MCF 10A (cell line): ENCODE measurements at regions of chr22 and their contacts with region 1.

Region 1: GRCh38 chr22:46035742-46036557 is 59.0 kb upstream of the WNT7B start:
- DNase-seq: peak; percentile 98
- H3K4me3 Mint-ChIP-seq: peak overlapping the region; percentile 75
- H3K27ac Mint-ChIP-seq: peak overlapping the region; percentile 75
- H3K4me1 Mint-ChIP-seq: peaks cover 4% of the 10 kb centered on the region
- H3K27me3 Mint-ChIP-seq: no peaks in the 10 kb centered on the region
- CTCF ChIP-seq: no peak

Region 2: DNA sequence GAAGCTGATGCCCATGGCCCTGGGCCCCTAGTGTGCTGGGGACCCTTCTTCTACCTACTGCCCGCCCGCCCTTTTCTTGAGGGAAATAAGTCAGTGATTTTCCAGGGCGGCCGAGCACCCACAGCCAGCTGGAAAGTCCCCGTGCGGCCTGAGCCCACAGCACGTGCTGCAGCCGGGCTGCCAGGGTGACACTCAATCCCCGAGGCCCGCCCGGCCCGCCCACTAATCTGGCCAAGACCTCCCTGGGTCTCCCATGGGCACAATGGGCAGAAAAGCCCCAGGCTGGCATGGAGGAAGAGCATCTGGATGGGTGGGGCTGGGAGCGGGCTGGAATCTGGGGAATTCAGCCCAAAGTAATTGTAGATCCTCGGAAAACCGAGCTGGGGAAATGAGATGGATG is 83.8 kb before region 1 on chr22:
- CTCF ChIA-PET with region 1: no interaction called
- POLR2A ChIA-PET with region 1: no interaction called
- intact Hi-C with region 1: no loop called
- DNase-seq: no peak
- H3K4me3 Mint-ChIP-seq: no peak overlapping the region
- H3K27ac Mint-ChIP-seq: no peak overlapping the region
- H3K4me1 Mint-ChIP-seq: no peaks in the 10 kb centered on the region
- H3K27me3 Mint-ChIP-seq: no peaks in the 10 kb centered on the region
- CTCF ChIP-seq: no peak

Region 3: DNA sequence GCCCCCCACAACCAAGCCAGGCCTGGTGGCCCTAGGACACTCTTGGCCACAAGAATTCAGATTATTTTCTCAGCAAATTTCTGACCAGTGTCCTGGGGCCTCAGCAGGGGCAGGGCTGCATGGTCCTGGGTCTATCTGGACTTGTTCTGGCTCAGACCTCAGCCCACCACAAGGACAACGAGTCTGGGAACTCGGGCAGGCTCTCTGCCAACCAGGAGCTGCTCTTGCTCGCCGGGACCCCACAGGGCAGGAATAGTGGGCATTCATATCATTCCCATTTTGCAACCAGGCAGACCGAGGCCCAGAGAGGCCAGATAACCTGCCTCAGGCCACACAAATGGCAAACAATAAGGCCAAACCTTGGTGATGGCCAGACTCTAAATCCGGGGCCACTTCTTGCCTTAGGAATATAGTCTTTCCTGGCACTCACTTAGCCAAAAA is 16.4 kb after region 1 on chr22:
- CTCF ChIA-PET with region 1: interaction called, 10 read pairs
- POLR2A ChIA-PET with region 1: interaction called, 160 read pairs
- intact Hi-C with region 1: no loop called
- DNase-seq: no peak
- H3K4me3 Mint-ChIP-seq: peak overlapping the region; percentile 81
- H3K27ac Mint-ChIP-seq: peak overlapping the region; percentile 92
- H3K4me1 Mint-ChIP-seq: peaks cover 21% of the 10 kb centered on the region
- H3K27me3 Mint-ChIP-seq: no peaks in the 10 kb centered on the region
- CTCF ChIP-seq: no peak

Region 4: GRCh38 chr22:46057762-46058420 is 21.9 kb after region 1 on chr22:
- CTCF ChIA-PET with region 1: interaction called, 4 read pairs
- POLR2A ChIA-PET with region 1: interaction called, 160 read pairs
- intact Hi-C with region 1: no loop called
- DNase-seq: peak; percentile 87
- H3K4me3 Mint-ChIP-seq: peak overlapping the region; percentile 81
- H3K27ac Mint-ChIP-seq: peak overlapping the region; percentile 98
- H3K4me1 Mint-ChIP-seq: peaks cover 33% of the 10 kb centered on the region
- H3K27me3 Mint-ChIP-seq: no peaks in the 10 kb centered on the region
- CTCF ChIP-seq: no peak

Region 5: DNA sequence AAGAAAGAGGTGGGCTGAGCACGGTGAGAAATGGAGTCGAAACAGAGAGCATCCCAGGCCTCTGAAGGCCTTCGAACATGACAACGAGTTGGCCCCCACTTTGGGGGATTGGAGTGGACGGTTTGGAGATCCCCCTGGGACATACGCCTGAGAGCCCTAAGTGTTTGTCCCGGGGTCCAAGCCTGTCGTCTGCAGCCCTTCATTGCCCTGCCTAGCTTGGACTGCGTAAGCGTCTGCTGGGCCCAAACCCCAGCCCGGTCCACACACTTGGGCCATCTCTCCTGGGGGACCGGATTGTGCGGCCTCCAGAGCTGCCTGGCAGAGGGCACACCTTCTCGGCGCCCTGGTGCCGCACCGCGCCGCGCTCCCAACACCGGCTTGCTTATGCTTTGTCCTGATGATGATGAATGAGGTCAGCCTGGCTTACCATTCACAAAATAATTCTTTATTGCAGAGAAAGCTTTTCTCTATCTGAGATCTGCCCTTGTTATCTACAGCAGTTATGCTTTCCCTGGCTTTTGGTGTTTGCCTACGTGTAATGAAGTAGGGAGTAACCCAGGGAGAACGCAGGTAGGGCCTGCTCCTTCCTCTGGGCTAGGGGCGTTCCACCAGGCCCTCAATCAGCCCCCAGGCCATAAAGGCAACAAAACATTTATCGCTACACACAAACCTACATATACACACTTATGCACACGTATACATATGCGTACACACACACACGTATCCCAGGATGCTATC is 28.4 kb after region 1 on chr22:
- CTCF ChIA-PET with region 1: interaction called, 4 read pairs
- POLR2A ChIA-PET with region 1: interaction called, 160 read pairs
- intact Hi-C with region 1: no loop called
- DNase-seq: peak; percentile 61
- H3K4me3 Mint-ChIP-seq: peak overlapping the region; percentile 74
- H3K27ac Mint-ChIP-seq: peak overlapping the region; percentile 100
- H3K4me1 Mint-ChIP-seq: peaks cover 54% of the 10 kb centered on the region
- H3K27me3 Mint-ChIP-seq: no peaks in the 10 kb centered on the region
- CTCF ChIP-seq: no peak

Region 6: GRCh38 chr22:46071451-46072109 is 35.6 kb after region 1 on chr22:
- CTCF ChIA-PET with region 1: interaction called, 3 read pairs
- POLR2A ChIA-PET with region 1: interaction called, 95 read pairs
- intact Hi-C with region 1: no loop called
- DNase-seq: peak; percentile 96
- H3K4me3 Mint-ChIP-seq: peak overlapping the region; percentile 96
- H3K27ac Mint-ChIP-seq: peak overlapping the region; percentile 100
- H3K4me1 Mint-ChIP-seq: peaks cover 24% of the 10 kb centered on the region
- H3K27me3 Mint-ChIP-seq: no peaks in the 10 kb centered on the region
- CTCF ChIP-seq: no peak

Region 7: GRCh38 chr22:46079861-46080821 is 44.2 kb after region 1 on chr22:
- CTCF ChIA-PET with region 1: interaction called, 3 read pairs
- POLR2A ChIA-PET with region 1: interaction called, 28 read pairs
- intact Hi-C with region 1: no loop called
- DNase-seq: peak; percentile 90
- H3K4me3 Mint-ChIP-seq: peak overlapping the region; percentile 96
- H3K27ac Mint-ChIP-seq: peak overlapping the region; percentile 100
- H3K4me1 Mint-ChIP-seq: peaks cover 27% of the 10 kb centered on the region
- H3K27me3 Mint-ChIP-seq: no peaks in the 10 kb centered on the region
- CTCF ChIP-seq: no peak

Region 8: DNA sequence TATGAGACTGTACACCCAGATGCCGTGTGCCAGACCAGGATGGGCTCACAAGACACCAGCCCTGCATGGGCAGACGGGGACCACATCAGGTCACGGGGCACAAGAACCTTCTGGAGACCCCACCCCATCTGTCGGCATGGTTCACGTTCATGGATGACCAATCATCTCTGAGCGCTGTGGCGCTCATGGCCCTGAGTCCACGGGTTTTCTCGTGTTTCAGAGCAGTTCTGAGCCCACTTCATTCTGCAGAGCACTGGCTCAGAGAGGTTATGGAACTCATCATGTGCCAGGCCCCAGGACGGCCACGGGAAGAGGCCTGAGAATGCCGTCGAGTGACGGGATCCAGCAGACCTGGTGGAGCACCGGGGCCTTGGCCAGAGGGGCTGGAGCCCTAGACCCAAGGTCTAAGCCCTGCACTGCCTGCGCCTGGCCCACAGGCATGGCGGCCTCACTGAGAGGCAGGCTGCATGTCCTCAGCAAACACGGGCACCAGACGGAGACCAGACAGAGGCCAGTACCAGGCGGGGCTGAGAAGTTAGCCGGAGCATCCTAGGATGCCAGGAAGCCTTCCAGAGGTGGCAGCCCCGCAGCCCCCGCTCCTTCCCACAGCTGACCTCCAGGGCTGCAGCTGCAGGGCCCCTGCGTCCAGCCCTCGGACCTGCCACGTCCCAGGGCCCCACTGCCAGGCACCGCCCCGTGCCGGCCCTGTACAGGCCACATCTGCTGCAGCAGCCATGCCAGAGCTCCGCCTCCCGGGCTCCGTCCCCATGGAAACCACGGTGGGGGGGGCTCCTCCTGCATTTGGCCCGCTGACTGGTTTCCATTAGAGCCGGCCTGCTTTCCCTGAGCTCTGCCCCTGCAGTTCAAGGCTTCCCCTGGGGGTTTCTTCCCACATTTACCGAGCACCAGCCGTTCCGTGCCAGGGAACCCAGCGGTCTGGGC is 51.7 kb after region 1 on chr22:
- CTCF ChIA-PET with region 1: interaction called, 3 read pairs
- POLR2A ChIA-PET with region 1: interaction called, 27 read pairs
- intact Hi-C with region 1: no loop called
- DNase-seq: peak; percentile 84
- H3K4me3 Mint-ChIP-seq: peak overlapping the region; percentile 96
- H3K27ac Mint-ChIP-seq: peak overlapping the region; percentile 100
- H3K4me1 Mint-ChIP-seq: peaks cover 40% of the 10 kb centered on the region
- H3K27me3 Mint-ChIP-seq: no peaks in the 10 kb centered on the region
- CTCF ChIP-seq: no peak